HepG2 (cell line): ENCODE measurements at regions of chr11 and their contacts with region 1.

Region 1: DNA sequence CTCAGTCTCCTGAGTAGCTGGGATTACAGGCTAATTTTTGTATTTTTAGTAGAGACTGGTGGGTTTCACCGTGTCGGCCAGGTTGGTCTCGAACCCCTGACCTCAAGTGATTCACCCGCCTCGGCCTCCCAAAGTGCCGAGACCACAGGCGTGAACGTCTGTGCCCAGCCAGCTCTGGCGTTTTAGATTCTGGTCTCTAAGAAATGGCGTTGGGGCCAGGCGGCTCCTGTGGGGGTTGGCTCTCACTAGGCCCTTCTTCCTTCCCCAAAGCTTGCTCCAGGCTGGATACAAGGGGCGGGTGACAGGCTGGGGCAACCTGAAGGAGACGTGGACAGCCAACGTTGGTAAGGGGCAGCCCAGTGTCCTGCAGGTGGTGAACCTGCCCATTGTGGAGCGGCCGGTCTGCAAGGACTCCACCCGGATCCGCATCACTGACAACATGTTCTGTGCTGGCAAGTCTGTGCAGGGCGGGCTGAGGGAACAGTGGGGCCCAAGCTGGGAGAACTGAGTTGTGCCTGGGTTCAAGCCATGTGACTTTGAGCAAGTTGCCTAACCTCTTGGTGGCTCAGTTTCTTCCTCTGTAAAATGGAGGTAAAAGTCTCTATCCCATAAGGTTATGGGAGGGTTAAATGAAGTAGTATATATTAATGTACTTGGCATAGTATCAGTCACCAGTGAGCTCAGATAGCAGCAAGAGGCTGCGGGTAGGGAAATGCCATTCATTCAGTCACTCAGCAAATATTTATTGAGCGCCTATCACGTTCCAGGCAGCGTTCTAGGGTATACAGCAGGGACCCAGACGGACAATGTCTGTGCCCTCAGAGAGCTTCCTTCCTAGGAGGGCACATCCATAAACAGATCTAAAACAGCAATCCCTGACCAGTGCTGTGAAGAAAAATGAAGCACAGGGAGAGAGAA is 10.4 kb downstream of the F2 start:
- DNase-seq: no peak
- ATAC-seq: peak; percentile 3; the same call in 1 of the 3 replicates
- H3K4me3 ChIP-seq: no peak overlapping the region
- H3K27ac ChIP-seq: no peak overlapping the region
- H3K4me1 ChIP-seq: peaks cover 56% of the 10 kb centered on the region
- H3K27me3 ChIP-seq: no peaks in the 10 kb centered on the region
- CTCF ChIP-seq: no peak
- EP300 ChIP-seq: no peak
- POLR2A ChIP-seq: peak in 1 of 2 experiments; percentile 36; a peak in 1 of 4 replicates
- RAD21 ChIP-seq: no peak

Region 2: GRCh38 chr11:46457659-46458424 is 271.5 kb before region 1 on chr11:
- CTCF ChIA-PET with region 1: no interaction called
- POLR2A ChIA-PET with region 1: no interaction called
- in situ Hi-C with region 1: no loop called
- intact Hi-C with region 1: no loop called
- DNase-seq: no peak
- ATAC-seq: no peak
- H3K4me3 ChIP-seq: no peak overlapping the region
- H3K27ac ChIP-seq: no peak overlapping the region
- H3K4me1 ChIP-seq: peaks cover 32% of the 10 kb centered on the region
- H3K27me3 ChIP-seq: no peaks in the 10 kb centered on the region
- CTCF ChIP-seq: no peak
- EP300 ChIP-seq: no peak
- POLR2A ChIP-seq: no peak
- RAD21 ChIP-seq: no peak

Region 3: GRCh38 chr11:46693597-46694012 is 35.8 kb before region 1 on chr11:
- CTCF ChIA-PET with region 1: no interaction called
- POLR2A ChIA-PET with region 1: interaction called, 272 read pairs
- in situ Hi-C with region 1: loop called (anchors 5 kb)
- intact Hi-C with region 1: no loop called
- DNase-seq: no peak
- ATAC-seq: no peak
- H3K4me3 ChIP-seq: no peak overlapping the region
- H3K27ac ChIP-seq: peak overlapping the region; percentile 13
- H3K4me1 ChIP-seq: peaks cover 74% of the 10 kb centered on the region
- H3K27me3 ChIP-seq: no peaks in the 10 kb centered on the region
- CTCF ChIP-seq: no peak
- EP300 ChIP-seq: no peak
- POLR2A ChIP-seq: no peak
- RAD21 ChIP-seq: no peak